Common myeloid progenitor, CD34-positive (primary cell): ENCODE measurements at regions of chr2 and their contacts with region 1.

Region 1: GRCh38 chr2:85678794-85679672 is 11.0 kb upstream of the SFTPB start:
- DNase-seq: peak; percentile 54 to 64 (median 57)
- H3K4me3 ChIP-seq: peak overlapping the region in 3 of 7 experiments; percentile 26 to 57 (median 41)
- H3K27ac ChIP-seq: no peak overlapping the region
- H3K4me1 ChIP-seq: peaks cover 0 to 18% (median 13%) of the 10 kb centered on the region in 4 experiments
- H3K27me3 ChIP-seq: peaks cover 0 to 2% (median 0%) of the 10 kb centered on the region in 5 experiments

Region 2: GRCh38 chr2:85648619-85649018 is 30.4 kb before region 1 on chr2:
- CTCF ChIA-PET with region 1: interaction called, 11 read pairs
- POLR2A ChIA-PET with region 1: no interaction called
- DNase-seq: peak; percentile 34 to 61 (median 57)
- H3K4me3 ChIP-seq: no peak overlapping the region
- H3K27ac ChIP-seq: no peak overlapping the region
- H3K4me1 ChIP-seq: no peaks in the 10 kb centered on the region
- H3K27me3 ChIP-seq: no peaks in the 10 kb centered on the region

Region 3: DNA sequence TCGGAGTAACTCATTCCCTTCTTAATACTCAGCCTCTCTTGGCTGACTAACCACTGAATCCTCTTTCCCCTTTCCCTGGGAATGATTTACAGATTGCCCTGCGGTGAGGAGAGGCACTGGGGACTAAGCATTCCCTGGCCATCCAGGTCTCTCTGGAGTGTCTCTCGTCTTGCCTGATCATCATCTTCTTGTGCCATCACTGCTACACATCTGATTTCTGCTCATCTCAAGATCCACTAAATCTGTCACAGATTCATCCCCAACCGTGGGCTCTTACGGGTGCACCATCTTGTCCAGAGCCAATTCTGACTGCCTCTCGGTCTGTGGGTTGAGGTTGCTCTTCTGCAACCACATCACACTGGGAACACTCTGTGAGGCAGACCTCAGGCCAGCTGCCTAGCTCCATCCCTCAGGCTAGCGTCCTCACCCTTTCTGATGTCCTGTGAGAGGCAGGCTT is 23.0 kb before region 1 on chr2:
- CTCF ChIA-PET with region 1: interaction called, 11 read pairs
- POLR2A ChIA-PET with region 1: interaction called, 3 read pairs
- DNase-seq: no peak
- H3K4me3 ChIP-seq: no peak overlapping the region
- H3K27ac ChIP-seq: no peak overlapping the region
- H3K4me1 ChIP-seq: peaks cover 0 to 5% (median 4%) of the 10 kb centered on the region in 4 experiments
- H3K27me3 ChIP-seq: no peaks in the 10 kb centered on the region

Region 4: GRCh38 chr2:85694052-85695025 is 15.3 kb after region 1 on chr2 and contains the start of gene GNLY:
- CTCF ChIA-PET with region 1: interaction called, 19 read pairs
- POLR2A ChIA-PET with region 1: no interaction called
- DNase-seq: no peak
- H3K4me3 ChIP-seq: no peak within 1 kb of the TSS
- H3K27ac ChIP-seq: no peak within 1 kb of the TSS
- H3K4me1 ChIP-seq: peaks cover 0 to 22% (median 15%) of the 10 kb centered on the region in 4 experiments
- H3K27me3 ChIP-seq: no peaks in the 10 kb centered on the region

Region 5: DNA sequence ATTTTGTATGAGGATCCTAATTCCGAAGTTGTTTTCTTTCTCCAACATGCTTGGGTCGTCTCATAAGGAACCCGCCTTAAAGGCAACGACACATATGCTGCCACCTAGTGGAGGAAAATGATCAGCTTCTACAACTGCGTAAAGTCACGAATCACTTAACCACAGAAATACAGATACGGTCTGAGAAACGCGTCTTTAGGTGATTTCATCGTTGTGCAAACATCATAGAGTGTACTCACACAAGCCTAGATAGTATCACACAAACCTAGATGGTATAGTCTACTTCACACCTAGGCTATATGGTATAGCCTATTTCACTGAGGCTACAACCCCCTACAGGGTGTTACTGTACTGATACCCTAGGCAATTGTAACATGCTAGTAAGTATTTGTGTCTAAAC is 28.3 kb after region 1 on chr2:
- CTCF ChIA-PET with region 1: interaction called, 102 read pairs
- POLR2A ChIA-PET with region 1: interaction called, 3 read pairs
- DNase-seq: peak; percentile 91 to 95 (median 93)
- H3K4me3 ChIP-seq: no peak overlapping the region
- H3K27ac ChIP-seq: no peak overlapping the region
- H3K4me1 ChIP-seq: peaks cover 19 to 72% (median 55%) of the 10 kb centered on the region in 4 experiments
- H3K27me3 ChIP-seq: no peaks in the 10 kb centered on the region

Region 6: GRCh38 chr2:85712849-85713602 is 34.0 kb after region 1 on chr2:
- CTCF ChIA-PET with region 1: interaction called, 102 read pairs
- POLR2A ChIA-PET with region 1: interaction called, 3 read pairs
- DNase-seq: no peak
- H3K4me3 ChIP-seq: peak overlapping the region in 3 of 7 experiments; percentile 26 to 44 (median 43)
- H3K27ac ChIP-seq: no peak overlapping the region
- H3K4me1 ChIP-seq: peaks cover 20 to 75% (median 52%) of the 10 kb centered on the region in 4 experiments
- H3K27me3 ChIP-seq: no peaks in the 10 kb centered on the region